Ascending aorta (tissue), 2 donors: ENCODE measurements at regions of chr10 and their contacts with region 1.

Region 1: GRCh38 chr10:113045147-113046055 is 95.4 kb downstream of the TCF7L2 start:
- DNase-seq: no peak
- H3K4me3 ChIP-seq: no peak overlapping the region
- H3K27ac ChIP-seq: peak overlapping the region; percentile 89 to 96
- H3K4me1 ChIP-seq: peaks cover 16 to 76% of the 10 kb centered on the region in 2 donors
- H3K27me3 ChIP-seq: no peaks in the 10 kb centered on the region
- CTCF ChIP-seq: no peak

Region 2: DNA sequence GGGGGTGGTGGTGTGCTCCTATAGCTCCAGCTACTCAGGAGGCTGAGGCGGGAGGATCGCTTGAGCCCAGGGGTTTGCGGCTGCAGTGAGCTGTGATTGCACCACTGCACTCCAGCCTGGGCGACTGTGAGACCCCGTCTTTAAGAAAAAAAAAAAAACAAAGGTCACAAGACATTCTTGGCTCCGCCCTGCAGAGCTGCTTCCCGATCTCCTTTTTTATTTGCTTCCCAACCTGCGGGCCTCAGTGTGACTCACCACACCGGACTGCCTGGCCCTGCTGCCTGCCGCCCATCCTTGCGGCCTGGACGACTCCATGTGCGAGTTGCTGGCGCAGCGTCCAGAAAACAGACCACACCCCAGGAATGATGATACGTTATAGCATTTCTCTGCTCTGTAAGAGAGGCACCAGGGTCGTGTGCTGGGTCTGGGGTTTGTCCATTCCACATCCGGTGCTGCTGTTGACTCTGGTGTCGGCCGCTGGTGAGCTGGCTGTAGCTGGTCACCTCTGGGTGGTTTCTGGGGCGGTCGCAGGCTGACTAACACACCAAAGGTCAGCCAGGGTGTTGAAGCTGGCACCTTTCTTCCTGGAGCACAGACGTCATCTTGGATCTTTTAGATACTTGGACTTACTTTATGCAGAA is 28.3 kb after region 1 on chr10:
- intact Hi-C with region 1: no loop called
- DNase-seq: peak; percentile 69 to 96
- H3K4me3 ChIP-seq: peak overlapping the region in 1 of 2 donors; percentile 19
- H3K27ac ChIP-seq: peak overlapping the region; percentile 83 to 87
- H3K4me1 ChIP-seq: peaks cover 11 to 36% of the 10 kb centered on the region in 2 donors
- H3K27me3 ChIP-seq: no peaks in the 10 kb centered on the region
- CTCF ChIP-seq: no peak

Region 3: GRCh38 chr10:113087165-113088029 is 42.0 kb after region 1 on chr10:
- intact Hi-C with region 1: loop called (anchors 1 kb)
- DNase-seq: peak; percentile 28 to 91
- H3K4me3 ChIP-seq: no peak overlapping the region
- H3K27ac ChIP-seq: peak overlapping the region; percentile 16 to 66
- H3K4me1 ChIP-seq: peaks cover 0 to 22% of the 10 kb centered on the region in 2 donors
- H3K27me3 ChIP-seq: no peaks in the 10 kb centered on the region
- CTCF ChIP-seq: no peak